Activated CD4-positive, alpha-beta memory T cell treated with anti-CD3 and anti-CD28 coated beads for 36 hours (primary cell): ENCODE measurements at regions of chr12 and their contacts with region 1.

Region 1: GRCh38 chr12:47837190-47838171 is 17.8 kb upstream of the HDAC7 start:
- DNase-seq: peak; percentile 76
- H3K4me3 Mint-ChIP-seq: no peak overlapping the region
- H3K27ac Mint-ChIP-seq: peak overlapping the region; percentile 68
- H3K4me1 Mint-ChIP-seq: peaks cover 59% of the 10 kb centered on the region
- H3K27me3 Mint-ChIP-seq: no peaks in the 10 kb centered on the region

Region 2: DNA sequence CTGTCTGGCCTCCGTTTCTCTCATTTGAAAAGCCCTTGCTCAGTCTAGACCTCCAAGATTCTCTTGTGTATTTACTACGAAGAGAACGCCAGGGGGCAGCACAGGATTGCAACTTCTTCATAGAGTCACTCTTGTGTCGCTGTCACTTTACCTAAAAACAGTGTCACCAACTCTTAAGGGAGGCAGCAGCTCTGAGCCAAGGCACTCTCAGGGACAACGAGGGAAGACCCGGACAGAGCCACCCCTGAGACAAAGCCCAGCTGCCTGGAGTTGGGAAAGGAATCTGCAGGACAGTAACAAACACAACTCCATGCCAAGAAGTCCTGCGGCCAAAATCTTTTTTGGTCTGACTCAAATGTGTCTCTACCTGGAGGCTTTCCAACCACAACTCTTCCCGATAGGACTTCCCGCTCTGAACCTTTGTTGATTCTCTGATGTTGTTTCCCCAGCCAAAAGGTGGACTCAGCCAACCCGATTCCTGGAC is 122.0 kb before region 1 on chr12:
- CTCF ChIA-PET with region 1: interaction called, 74 read pairs
- POLR2A ChIA-PET with region 1: interaction called, 3 read pairs
- intact Hi-C with region 1: loop called (anchors 1 kb)
- DNase-seq: peak; percentile 85
- H3K4me3 Mint-ChIP-seq: no peak overlapping the region
- H3K27ac Mint-ChIP-seq: peak overlapping the region; percentile 47
- H3K4me1 Mint-ChIP-seq: peaks cover 16% of the 10 kb centered on the region
- H3K27me3 Mint-ChIP-seq: no peaks in the 10 kb centered on the region

Region 3: GRCh38 chr12:47758834-47759690 is 78.4 kb before region 1 on chr12 and contains the start of gene RAPGEF3:
- CTCF ChIA-PET with region 1: interaction called, 17 read pairs
- POLR2A ChIA-PET with region 1: interaction called, 16 read pairs
- intact Hi-C with region 1: loop called (anchors 5 kb)
- DNase-seq: peak; percentile 86
- H3K4me3 Mint-ChIP-seq: peak within 1 kb of the TSS; percentile 68
- H3K27ac Mint-ChIP-seq: no peak within 1 kb of the TSS
- H3K4me1 Mint-ChIP-seq: peaks cover 46% of the 10 kb centered on the region
- H3K27me3 Mint-ChIP-seq: no peaks in the 10 kb centered on the region
- total RNA-seq, gene RAPGEF3: 2.1 to 2.5 TPM

Region 4: GRCh38 chr12:47785036-47785886 is 52.2 kb before region 1 on chr12:
- CTCF ChIA-PET with region 1: interaction called, 127 read pairs
- POLR2A ChIA-PET with region 1: interaction called, 8 read pairs
- intact Hi-C with region 1: no loop called
- DNase-seq: no peak
- H3K4me3 Mint-ChIP-seq: no peak overlapping the region
- H3K27ac Mint-ChIP-seq: peak overlapping the region; percentile 80
- H3K4me1 Mint-ChIP-seq: peaks cover 32% of the 10 kb centered on the region
- H3K27me3 Mint-ChIP-seq: no peaks in the 10 kb centered on the region

Region 5: DNA sequence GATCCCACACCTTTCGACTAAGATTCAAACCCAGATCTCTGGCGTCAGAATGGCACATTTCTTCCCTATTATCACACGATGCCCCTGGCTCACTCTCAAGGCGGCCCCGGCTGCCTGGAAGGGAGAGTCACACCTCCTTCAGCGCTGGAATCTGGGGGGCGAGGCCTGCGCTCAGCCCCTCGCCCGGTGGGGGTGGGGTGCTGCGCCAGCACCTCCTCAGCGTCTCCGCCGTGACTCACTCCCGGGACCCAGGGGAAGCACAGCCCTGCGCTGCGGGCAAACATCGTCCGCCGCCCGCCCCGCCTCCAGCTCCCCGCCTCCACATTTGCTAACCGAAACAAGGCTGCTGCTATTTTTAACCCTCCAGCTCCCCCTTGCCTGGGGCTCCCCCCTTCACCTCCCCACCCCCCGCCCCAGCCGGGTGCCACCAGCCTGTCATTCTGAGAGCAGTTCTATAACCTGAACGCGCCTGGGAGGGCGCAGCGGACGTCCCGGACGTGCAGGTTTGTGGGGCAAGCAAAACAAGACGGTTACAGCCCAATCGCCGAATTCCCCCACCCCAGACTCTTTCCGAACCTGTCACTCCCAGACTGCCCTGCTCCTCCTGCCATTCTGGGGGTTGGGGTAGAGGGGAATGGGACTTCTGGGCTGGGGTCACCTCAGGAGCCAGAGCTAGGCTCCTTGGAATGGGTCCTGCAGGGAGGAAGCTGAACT is 24.5 kb before region 1 on chr12:
- CTCF ChIA-PET with region 1: interaction called, 795 read pairs
- POLR2A ChIA-PET with region 1: interaction called, 540 read pairs
- intact Hi-C with region 1: loop called (anchors 1 kb)
- DNase-seq: peak; percentile 98
- H3K4me3 Mint-ChIP-seq: peak overlapping the region; percentile 92
- H3K27ac Mint-ChIP-seq: peak overlapping the region; percentile 99
- H3K4me1 Mint-ChIP-seq: peaks cover 82% of the 10 kb centered on the region
- H3K27me3 Mint-ChIP-seq: no peaks in the 10 kb centered on the region

Region 6: DNA sequence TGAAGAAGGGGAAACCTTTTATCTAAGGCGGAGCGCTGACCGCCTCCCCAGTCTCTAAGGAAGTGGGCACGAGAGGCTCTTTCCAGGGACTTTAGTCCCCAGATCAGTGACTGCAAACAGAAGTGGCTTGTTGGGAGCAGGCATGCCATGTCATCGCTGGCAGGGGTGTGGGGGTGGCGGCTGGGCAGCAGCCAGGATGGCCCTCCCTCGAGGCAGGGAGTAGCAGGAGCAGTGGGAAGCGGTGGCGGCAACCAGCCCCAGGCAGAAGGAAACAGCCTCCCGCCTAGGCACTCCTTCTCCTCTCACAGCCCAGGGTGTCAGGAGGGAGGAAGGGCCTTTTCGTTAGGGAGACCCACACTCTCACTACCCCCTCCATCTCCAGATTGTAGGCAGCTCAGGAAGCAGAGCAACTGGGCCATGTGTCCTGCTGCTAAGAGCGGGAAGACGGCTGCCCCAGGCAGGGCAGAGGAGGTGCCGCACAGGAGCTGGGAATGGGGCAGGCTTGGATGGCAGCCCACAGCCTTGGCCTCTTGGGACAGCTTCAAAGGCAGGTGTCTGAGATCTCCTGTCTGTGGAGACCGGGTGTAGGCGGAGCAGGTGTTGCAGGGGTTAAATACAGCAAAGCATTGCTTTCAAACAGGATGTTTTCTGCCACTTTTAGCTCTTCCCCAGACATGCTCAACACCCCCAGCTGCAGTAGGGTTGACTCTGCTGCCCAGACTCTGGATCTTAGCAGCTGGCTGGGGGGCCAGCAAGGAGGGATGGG is 45.5 kb after region 1 on chr12:
- CTCF ChIA-PET with region 1: interaction called, 33 read pairs
- POLR2A ChIA-PET with region 1: interaction called, 13 read pairs
- intact Hi-C with region 1: loop called (anchors 1 kb)
- DNase-seq: peak; percentile 67
- H3K4me3 Mint-ChIP-seq: peak overlapping the region; percentile 89
- H3K27ac Mint-ChIP-seq: peak overlapping the region; percentile 97
- H3K4me1 Mint-ChIP-seq: peaks cover 88% of the 10 kb centered on the region
- H3K27me3 Mint-ChIP-seq: no peaks in the 10 kb centered on the region

Region 7: GRCh38 chr12:48311313-48311712 is 473.8 kb after region 1 on chr12:
- CTCF ChIA-PET with region 1: no interaction called
- POLR2A ChIA-PET with region 1: no interaction called
- intact Hi-C with region 1: no loop called
- DNase-seq: no peak
- H3K4me3 Mint-ChIP-seq: no peak overlapping the region
- H3K27ac Mint-ChIP-seq: no peak overlapping the region
- H3K4me1 Mint-ChIP-seq: no peaks in the 10 kb centered on the region
- H3K27me3 Mint-ChIP-seq: no peaks in the 10 kb centered on the region

Region 8: GRCh38 chr12:48629541-48629940 is 792.1 kb after region 1 on chr12:
- CTCF ChIA-PET with region 1: no interaction called
- POLR2A ChIA-PET with region 1: no interaction called
- intact Hi-C with region 1: no loop called
- DNase-seq: no peak
- H3K4me3 Mint-ChIP-seq: no peak overlapping the region
- H3K27ac Mint-ChIP-seq: no peak overlapping the region
- H3K4me1 Mint-ChIP-seq: no peaks in the 10 kb centered on the region
- H3K27me3 Mint-ChIP-seq: peaks cover 10% of the 10 kb centered on the region